H1 (cell line): ENCODE measurements at regions of chr7 and their contacts with region 1.

Region 1: DNA sequence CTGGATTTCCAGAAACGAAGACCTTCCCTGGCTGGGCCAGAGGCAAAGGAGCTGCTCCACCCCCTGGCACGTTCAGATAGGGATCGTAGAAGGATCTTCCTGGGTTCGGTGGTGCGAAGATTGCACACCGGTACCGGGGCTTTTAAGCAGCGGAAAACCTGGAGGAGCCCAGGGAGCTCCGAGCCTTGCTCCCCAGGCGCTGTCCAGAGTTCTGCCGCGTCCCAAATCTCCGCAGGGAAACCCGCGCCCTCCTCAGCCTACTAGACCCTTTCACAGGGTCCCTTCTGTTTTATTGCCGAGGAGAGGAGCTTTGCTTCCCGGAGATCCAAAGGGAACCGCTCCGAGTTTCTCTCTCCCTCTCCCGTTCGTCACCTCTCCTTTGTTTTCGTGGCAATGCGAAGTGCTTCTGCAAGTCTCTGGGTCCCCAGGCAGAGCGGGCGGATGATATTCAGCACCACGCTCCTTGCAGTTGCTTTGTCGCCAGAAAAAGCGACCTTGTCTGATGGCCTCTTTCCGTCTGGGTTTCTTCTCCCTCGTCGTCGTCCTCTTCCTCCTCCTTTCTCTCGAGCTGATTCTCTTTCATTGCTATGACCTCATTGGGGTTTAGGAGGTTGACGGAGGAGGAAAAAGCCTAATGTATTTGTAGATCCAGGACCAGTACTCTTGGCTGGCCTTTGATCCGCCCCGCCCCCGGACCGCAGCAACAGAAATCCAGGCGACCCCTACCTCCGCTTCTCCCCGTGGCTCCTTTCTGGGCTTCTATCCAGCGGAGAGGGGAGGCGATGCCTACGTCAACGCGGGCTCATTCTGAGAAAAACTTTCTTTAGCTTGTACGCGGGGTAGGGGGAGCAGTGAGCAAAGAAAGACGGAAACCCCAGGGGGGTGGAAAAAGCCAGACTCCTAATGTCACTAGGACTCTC is at the start of gene TMEM196:
- DNase-seq: peak; percentile 33 to 83
- H3K4me3 ChIP-seq: peak within 1 kb of the TSS; percentile 47 to 66 (median 65)
- H3K27ac ChIP-seq: no peak within 1 kb of the TSS
- H3K4me1 ChIP-seq: peaks cover 0 to 3% (median 2%) of the 10 kb centered on the region in 4 experiments; a peak in 4 of 7 replicates
- H3K27me3 ChIP-seq: peaks cover 2 to 28% (median 19%) of the 10 kb centered on the region in 4 experiments
- CTCF ChIP-seq: no peak
- EP300 ChIP-seq: no peak
- POLR2A ChIP-seq: no peak
- RAD21 ChIP-seq: no peak
- total RNA-seq, gene TMEM196: 0.07 and 0.33 TPM in 2 replicates

Region 2: DNA sequence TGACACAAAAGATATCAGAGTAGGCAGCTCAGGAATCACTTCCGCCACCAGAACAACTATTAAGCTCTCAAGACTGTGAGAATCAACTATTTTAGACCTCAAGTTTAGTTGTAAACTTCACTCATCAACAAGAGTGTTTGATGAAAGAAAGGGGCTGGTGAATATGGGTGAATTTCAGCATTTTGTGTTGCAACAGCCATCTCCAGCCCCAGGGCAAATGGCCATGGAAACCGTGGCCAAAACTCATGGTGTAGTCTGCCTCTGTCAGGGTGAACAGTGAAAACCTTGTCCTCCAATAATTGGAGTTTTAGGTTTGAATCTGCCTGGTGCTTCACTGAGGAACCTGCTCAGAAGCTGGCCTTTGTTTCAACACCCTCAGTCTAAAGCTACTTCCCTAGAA is 124.3 kb before region 1 on chr7:
- CTCF ChIA-PET with region 1: no interaction called
- POLR2A ChIA-PET with region 1: no interaction called
- DNase-seq: no peak
- H3K4me3 ChIP-seq: no peak overlapping the region
- H3K27ac ChIP-seq: no peak overlapping the region
- H3K4me1 ChIP-seq: no peaks in the 10 kb centered on the region; a peak in 1 of 7 replicates
- H3K27me3 ChIP-seq: no peaks in the 10 kb centered on the region
- CTCF ChIP-seq: no peak
- EP300 ChIP-seq: no peak
- POLR2A ChIP-seq: no peak
- RAD21 ChIP-seq: no peak

Region 3: GRCh38 chr7:19754521-19755116 is 18.5 kb before region 1 on chr7:
- CTCF ChIA-PET with region 1: interaction called, 15 read pairs
- POLR2A ChIA-PET with region 1: no interaction called
- DNase-seq: no peak
- H3K4me3 ChIP-seq: no peak overlapping the region
- H3K27ac ChIP-seq: no peak overlapping the region
- H3K4me1 ChIP-seq: no peaks in the 10 kb centered on the region
- H3K27me3 ChIP-seq: no peaks in the 10 kb centered on the region
- CTCF ChIP-seq: peak in 2 of 3 experiments; percentile 25 to 51; a peak in 2 of 4 replicates
- EP300 ChIP-seq: no peak
- POLR2A ChIP-seq: no peak
- RAD21 ChIP-seq: peak; percentile 60 to 61